Spleen (tissue), 13 donors: ENCODE measurements at regions of chr1 and their contacts with region 1.

Region 1: GRCh38 chr1:29235955-29236684 is at the start of gene PTPRU:
- DNase-seq: peak; percentile 96
- H3K4me3 ChIP-seq: peak within 1 kb of the TSS; percentile 36 to 80 (median 57)
- H3K27ac ChIP-seq: peak within 1 kb of the TSS in 2 of 8 donors; percentile 40 to 43
- H3K4me1 ChIP-seq: peaks cover 18 to 34% (median 29%) of the 10 kb centered on the region in 6 donors
- H3K27me3 ChIP-seq: peaks cover 0 to 76% (median 36%) of the 10 kb centered on the region in 7 donors
- CTCF ChIP-seq: peak; percentile 37 to 97 (median 92)
- POLR2A ChIP-seq: no peak
- total RNA-seq, gene PTPRU: 4.3 to 10.8 (median 6.1) TPM

Region 2: DNA sequence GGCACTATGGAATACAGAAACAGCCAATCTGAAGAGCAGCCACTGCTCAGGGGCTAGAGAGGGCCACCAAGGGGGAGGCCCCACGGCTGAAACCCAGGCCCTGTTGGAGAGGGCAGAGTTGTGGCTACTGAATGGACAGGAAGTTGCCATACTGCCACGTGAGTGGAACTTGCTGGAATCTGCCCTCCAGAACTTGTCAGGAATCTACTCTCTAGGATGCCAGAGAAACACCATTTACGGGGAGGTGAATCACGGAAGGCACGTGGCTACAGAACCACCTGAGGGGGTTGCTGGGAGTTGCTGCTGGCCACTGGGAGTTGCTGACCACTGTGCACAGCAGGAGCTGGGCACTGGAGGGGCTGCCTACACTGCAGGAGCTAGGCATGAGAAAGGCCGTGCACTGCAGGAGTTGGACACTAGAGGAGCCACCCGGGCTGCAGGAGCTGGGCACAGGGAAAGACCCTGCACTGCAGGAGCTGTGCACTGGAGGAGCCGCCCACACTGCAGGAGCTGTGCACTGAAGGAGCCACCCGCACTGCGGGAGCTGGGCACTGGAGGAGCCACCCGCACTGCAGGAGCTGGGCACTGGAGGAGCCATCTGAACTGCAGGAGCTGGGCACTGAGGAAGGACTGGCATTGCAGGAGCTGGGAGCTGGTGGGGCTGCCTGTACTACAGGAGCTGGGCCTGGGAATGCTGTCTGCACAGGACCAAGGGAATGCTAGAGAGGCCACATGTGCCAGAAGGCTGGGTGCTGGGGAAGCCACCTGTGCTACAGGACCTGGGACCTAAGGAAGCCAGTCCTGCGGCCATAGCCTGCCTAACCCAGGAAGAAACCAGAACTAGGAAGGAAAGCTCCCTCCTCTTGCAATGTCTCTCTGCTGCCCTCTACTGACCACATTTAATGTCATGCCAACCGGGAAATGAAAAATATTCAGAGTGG is 1143.8 kb after region 1 on chr1:
- intact Hi-C with region 1: loop called (anchors 5 kb)
- DNase-seq: peak; percentile 61
- H3K4me3 ChIP-seq: no peak overlapping the region
- H3K27ac ChIP-seq: no peak overlapping the region
- H3K4me1 ChIP-seq: peaks cover 2 to 19% (median 6%) of the 10 kb centered on the region in 6 donors
- H3K27me3 ChIP-seq: peaks cover 0 to 77% (median 9%) of the 10 kb centered on the region in 7 donors
- CTCF ChIP-seq: peak in 10 of 11 experiments; percentile 58 to 79 (median 74)
- POLR2A ChIP-seq: no peak